Endothelial cell of umbilical vein (primary cell): ENCODE measurements at regions of chr21 and their contacts with region 1.

Region 1: DNA sequence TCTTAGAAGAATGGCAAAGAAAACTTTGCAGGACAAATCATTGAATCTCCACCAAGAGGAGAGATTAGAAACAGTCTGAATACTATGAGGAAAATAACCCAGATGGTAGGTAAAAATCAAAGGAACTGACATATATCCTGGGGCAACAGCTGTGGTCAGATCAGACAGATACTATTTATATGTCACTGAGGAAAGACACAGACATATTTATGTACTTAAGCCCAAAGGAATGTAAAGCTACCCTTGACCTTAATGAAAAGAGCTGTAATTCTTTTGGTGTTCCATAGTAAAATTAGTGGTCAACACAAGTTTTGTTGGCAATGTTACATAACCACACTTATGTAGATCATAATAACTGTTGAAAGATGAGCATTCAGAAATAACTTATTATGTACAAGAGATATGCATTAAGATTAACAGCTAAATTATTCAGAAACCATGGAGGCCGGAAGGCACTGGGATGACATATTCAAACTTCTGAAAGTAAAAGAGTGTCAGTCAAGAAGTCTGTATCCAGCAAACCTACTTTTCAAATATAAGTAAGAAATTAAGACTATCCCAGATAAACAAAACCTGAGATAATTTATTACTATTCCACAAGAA is 166.1 kb upstream of the SAMSN1 start:
- DNase-seq: peak; percentile 78
- H3K4me3 ChIP-seq: no peak overlapping the region
- H3K27ac ChIP-seq: peak overlapping the region; percentile 100
- H3K4me1 ChIP-seq: peaks cover 22% of the 10 kb centered on the region
- H3K27me3 ChIP-seq: no peaks in the 10 kb centered on the region
- CTCF ChIP-seq: no peak
- POLR2A ChIP-seq: no peak

Region 2: GRCh38 chr21:14306151-14306907 is 405.9 kb before region 1 on chr21:
- CTCF ChIA-PET with region 1: no interaction called
- POLR2A ChIA-PET with region 1: no interaction called
- dilution Hi-C with region 1: no loop called
- intact Hi-C with region 1: loop called (anchors 1 kb)
- DNase-seq: peak; percentile 43
- H3K4me3 ChIP-seq: no peak overlapping the region
- H3K27ac ChIP-seq: peak overlapping the region; percentile 10
- H3K4me1 ChIP-seq: peaks cover 8% of the 10 kb centered on the region
- H3K27me3 ChIP-seq: no peaks in the 10 kb centered on the region
- CTCF ChIP-seq: no peak
- POLR2A ChIP-seq: no peak

Region 3: DNA sequence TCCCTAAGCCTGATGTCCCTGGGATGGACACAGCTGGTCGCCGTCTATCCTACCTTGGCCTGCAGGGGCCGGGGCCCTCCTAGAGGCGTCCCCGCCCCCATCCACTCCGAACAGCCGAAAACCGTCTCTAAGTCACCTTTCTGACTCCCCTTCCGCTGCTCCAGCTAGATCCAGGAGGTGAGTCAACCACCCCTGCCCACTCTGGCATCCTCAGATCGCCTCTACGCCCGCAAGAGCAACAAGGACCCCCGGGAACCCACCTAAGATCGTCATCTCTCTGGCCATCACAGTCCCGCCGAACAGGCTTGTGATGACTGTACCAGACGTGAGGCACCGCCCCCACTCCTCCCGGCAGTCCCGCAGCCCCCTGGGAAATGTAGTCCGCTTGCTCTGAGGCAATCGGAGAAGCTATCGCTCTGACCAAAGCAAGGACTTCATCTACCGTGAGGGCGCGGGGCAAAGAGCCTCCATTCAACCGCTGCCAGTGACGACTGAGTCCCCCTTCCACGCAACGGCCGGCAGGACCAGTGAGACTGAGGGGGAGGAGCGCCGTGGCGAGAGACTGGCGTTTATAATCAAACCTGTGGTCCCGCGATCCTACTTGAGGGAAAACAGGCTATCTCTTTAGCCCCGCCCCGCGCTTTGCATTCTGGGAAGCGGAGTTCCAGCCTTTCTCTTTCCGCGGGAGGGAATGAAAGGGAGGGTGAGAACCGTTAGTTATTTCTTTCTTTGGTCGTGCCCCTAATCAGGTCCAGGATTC is 329.2 kb before region 1 on chr21 and contains the start of gene HSPA13:
- CTCF ChIA-PET with region 1: no interaction called
- POLR2A ChIA-PET with region 1: no interaction called
- dilution Hi-C with region 1: no loop called
- intact Hi-C with region 1: no loop called
- DNase-seq: peak; percentile 100
- H3K4me3 ChIP-seq: peak within 1 kb of the TSS; percentile 85 to 91 (median 85)
- H3K27ac ChIP-seq: peak within 1 kb of the TSS; percentile 93
- H3K4me1 ChIP-seq: peaks cover 26% of the 10 kb centered on the region
- H3K27me3 ChIP-seq: no peaks in the 10 kb centered on the region
- CTCF ChIP-seq: peak in 1 of 2 donors; percentile 14
- POLR2A ChIP-seq: peak; percentile 76
- total RNA-seq, gene HSPA13: 40.4 and 44.8 TPM in 2 replicates

Region 4: DNA sequence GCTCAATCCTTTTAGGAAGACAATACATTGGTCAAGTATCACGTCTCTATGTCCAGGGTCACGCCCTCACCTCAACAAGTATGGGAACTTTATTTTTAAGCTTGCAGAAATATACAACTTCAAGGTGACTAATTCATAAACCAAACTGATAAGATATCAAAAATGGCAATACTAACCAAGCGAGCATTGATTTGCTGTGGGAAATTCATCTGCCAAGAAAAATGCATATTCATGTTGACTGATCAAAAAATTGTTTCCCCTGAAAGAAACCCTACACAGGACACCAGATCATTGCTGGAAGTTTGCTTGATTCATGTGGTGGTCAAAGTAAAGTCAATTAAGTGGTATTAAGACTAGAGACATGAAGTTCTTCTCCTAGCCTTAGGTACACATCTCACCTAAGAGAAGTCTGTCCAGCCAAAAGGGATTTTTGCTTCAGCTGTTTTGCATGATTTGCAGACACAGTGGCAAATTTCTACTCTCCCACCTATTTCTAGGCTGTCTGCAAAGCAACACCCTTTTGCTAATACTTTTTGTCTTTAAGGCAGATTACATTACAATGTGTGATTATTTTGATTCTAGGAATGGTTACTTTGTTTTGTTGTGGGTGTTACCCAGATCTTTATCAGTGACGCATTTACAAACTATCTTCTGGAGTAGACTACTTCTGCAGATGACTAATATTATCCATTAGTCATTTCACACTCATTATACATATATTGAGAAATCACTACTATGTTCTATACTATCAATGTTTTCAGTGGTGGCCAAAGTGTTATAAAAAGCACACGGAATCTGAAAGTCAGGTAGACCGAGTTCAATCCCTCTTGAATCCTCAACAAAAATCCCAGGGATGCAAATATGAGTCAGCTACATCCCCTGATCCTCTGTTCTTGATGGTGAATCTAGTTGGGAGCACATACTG is 178.5 kb before region 1 on chr21:
- CTCF ChIA-PET with region 1: no interaction called
- POLR2A ChIA-PET with region 1: no interaction called
- dilution Hi-C with region 1: no loop called
- intact Hi-C with region 1: loop called (anchors 1 kb)
- DNase-seq: peak; percentile 77
- H3K4me3 ChIP-seq: peak overlapping the region in 1 of 3 experiments; percentile 39
- H3K27ac ChIP-seq: peak overlapping the region; percentile 91
- H3K4me1 ChIP-seq: peaks cover 17% of the 10 kb centered on the region
- H3K27me3 ChIP-seq: no peaks in the 10 kb centered on the region
- CTCF ChIP-seq: no peak
- POLR2A ChIP-seq: no peak

Region 5: DNA sequence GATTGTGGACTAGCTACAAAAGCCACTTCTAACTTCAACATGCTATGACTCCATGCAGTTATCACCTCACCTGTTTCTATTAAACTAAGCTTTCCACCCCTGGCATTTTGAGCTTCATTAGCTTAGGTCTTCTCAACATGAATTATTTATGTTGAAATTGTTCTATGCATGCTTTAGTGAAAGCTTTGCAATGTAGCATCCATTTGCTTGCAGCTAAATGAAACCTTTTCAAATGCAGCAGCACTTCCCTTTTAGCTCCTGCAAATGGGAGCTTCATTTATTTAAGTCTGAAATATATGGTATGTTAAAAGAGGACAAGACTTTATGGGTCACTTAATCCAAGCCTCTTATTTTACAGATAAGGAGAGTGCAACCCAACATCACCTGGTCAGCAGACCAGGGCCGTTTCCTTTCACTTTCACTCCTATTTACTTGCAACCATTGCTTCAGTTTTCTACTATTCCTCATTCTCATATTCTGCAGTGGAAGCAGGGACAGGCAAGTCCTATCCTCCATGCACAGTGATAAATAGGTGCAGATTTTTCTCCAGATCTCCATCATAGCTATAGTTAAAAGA is 109.8 kb before region 1 on chr21:
- CTCF ChIA-PET with region 1: interaction called, 4 read pairs
- POLR2A ChIA-PET with region 1: no interaction called
- dilution Hi-C with region 1: no loop called
- intact Hi-C with region 1: loop called (anchors 1 kb)
- DNase-seq: no peak
- H3K4me3 ChIP-seq: no peak overlapping the region
- H3K27ac ChIP-seq: peak overlapping the region; percentile 57
- H3K4me1 ChIP-seq: peaks cover 15% of the 10 kb centered on the region
- H3K27me3 ChIP-seq: no peaks in the 10 kb centered on the region
- CTCF ChIP-seq: no peak
- POLR2A ChIP-seq: no peak

Region 6: DNA sequence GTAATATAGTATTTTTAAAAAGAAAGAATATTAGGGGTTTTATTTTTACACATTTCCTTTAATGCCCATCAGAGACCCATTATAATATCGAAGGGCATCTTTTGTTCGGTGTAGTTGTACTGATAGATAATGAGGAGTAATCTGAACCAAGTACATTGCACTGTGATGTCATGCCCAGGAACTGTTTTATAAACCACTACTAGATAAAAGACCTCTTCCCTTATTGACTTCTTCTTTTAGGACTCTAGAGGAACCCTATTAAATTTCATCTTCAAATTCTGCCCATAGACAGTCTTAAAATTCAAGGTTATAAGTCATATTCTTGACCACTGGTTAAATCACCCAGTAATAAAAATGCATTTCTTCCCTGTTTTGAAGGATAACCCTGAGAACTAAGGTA is 146.1 kb after region 1 on chr21:
- CTCF ChIA-PET with region 1: no interaction called
- POLR2A ChIA-PET with region 1: no interaction called
- dilution Hi-C with region 1: no loop called
- intact Hi-C with region 1: no loop called
- DNase-seq: no peak
- H3K4me3 ChIP-seq: no peak overlapping the region
- H3K27ac ChIP-seq: no peak overlapping the region
- H3K4me1 ChIP-seq: no peaks in the 10 kb centered on the region
- H3K27me3 ChIP-seq: no peaks in the 10 kb centered on the region
- CTCF ChIP-seq: no peak
- POLR2A ChIP-seq: no peak